Motor neuron (in vitro differentiated cells): ENCODE measurements at regions of chr10 and their contacts with region 1.

Region 1: GRCh38 chr10:84537447-84537931 is 209.1 kb downstream of the CCSER2 start:
- ATAC-seq: peak; percentile 16 to 84 (median 66)
- H3K4me3 ChIP-seq: no peak overlapping the region
- H3K27ac ChIP-seq: no peak overlapping the region
- H3K4me1 ChIP-seq: peaks cover 3 to 6% of the 10 kb centered on the region in 2 donors

Region 2: DNA sequence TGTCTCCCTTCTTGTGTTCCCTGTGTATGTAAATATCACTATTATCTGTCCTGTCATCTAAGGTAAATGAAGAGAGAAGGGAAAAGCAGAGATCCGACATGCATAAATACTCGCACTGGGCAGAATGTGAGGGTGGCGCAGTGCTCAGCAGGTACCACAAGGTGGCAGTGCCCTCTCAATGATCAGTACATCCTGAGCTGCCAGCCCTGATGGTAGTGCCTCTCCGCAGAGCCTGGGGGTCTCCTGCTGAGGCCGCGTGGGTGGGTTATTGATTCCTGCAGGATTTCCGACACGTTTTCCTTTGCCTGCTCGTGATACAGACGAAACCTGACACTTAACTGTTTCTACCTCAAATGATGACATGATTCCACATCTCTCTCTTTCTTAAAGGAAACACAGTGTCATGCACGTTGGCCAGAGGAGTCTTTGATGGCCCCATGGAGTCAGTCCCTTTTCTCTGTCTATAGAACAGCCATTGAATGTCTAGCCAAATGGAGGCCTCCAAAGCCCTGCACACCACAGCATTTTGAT is 272.8 kb before region 1 on chr10:
- in situ Hi-C with region 1: loop called in 7 of 9 experiments (anchors 10 to 25 kb)
- ATAC-seq: peak; percentile 79 to 100 (median 100)
- H3K4me3 ChIP-seq: no peak overlapping the region
- H3K27ac ChIP-seq: no peak overlapping the region
- H3K4me1 ChIP-seq: peaks cover 3 to 5% of the 10 kb centered on the region in 2 donors

Region 3: DNA sequence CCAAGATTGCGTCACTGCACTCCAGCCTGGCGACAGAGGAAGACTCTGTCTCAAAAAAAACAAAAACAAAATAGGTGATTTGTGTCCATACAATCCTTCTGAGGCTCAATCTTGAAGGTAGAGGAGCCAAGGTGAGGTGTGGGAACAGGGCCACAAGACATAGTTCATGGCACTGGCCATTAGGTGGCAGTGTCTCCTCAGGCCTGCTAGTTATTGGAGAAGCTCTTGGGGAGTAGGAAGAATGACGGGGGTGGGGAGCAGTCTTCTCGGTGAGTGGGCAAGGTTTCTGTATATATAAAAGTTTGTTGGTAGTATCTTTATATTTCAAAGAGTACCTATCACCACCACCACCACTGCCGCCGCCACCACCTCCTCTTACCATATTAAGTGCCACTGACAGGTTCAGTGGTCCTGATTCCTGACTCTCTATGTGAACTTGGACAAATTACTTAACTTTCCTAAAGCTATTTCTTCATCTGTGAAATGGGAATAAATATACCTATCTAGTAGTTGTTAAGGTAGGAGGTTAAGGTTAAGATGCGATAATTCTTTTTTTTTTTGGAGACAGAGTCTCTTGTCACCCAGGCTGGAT is 185.1 kb before region 1 on chr10:
- in situ Hi-C with region 1: loop called in 2 of 9 experiments (anchors 25 kb)
- ATAC-seq: peak in 3 of 8 experiments; percentile 79 to 88 (median 85)
- H3K4me3 ChIP-seq: no peak overlapping the region
- H3K27ac ChIP-seq: no peak overlapping the region
- H3K4me1 ChIP-seq: peaks cover 6 to 7% of the 10 kb centered on the region in 2 donors

Region 4: DNA sequence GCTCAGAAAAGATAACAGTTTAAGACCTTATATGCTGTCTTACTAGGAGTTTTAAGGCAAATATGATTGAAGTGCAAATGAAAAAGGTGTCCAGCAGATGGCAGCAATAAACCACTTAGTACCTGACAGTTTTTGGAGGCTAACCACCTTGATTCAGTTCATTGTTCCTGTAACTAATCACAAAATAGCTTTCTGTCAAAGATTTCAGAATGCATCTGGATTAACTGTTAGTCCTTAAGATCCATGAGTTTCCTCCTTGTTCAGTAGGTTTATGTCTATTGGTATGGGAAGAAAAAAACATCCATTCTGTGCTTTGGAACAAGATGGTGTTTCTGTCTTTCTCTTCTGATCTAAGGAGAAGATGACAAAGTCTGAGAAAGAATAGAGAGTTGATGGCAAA is 162.5 kb before region 1 on chr10:
- in situ Hi-C with region 1: loop called in 3 of 9 experiments (anchors 10 to 25 kb)
- ATAC-seq: peak in 3 of 8 experiments; percentile 42 to 56 (median 43)
- H3K4me3 ChIP-seq: no peak overlapping the region
- H3K27ac ChIP-seq: no peak overlapping the region
- H3K4me1 ChIP-seq: no peaks in the 10 kb centered on the region